ENCODE measurements at regions of chr12 and their contacts with region 1.

Region 1: GRCh38 chr12:818733-819132 is 66.4 kb downstream of the WNK1 start:
- DNase-seq: peak; percentile 44
- ATAC-seq: no peak
- H3K4me3 ChIP-seq: no peak overlapping the region
- H3K27ac ChIP-seq: no peak overlapping the region
- H3K4me1 ChIP-seq: peaks cover 10% of the 10 kb centered on the region; the same call in 1 of the 2 replicates
- H3K27me3 ChIP-seq: no peaks in the 10 kb centered on the region
- CTCF ChIP-seq: peak; percentile 30; the same call in 1 of the 2 replicates

Region 2: DNA sequence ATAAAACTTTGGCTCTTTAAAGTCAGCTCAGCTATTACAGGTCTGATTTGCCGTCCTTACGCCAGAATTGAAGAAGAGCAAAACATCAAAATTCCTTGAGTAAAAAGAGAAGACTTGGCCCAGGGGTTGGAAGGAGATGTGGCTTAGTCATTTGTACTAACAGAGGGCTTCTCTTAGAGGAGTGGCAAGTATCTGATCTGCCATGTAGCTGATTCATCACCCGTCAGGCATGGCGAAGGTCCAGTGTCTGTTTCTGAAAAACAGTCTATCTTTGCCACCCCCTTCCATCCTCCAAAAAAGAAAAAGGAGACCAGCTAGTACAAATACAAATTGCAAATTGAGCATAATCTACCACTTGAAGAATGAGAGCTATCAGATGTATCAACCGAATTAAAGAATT is 38.9 kb after region 1 on chr12:
- CTCF ChIA-PET with region 1: interaction called, 12 read pairs
- POLR2A ChIA-PET with region 1: no interaction called
- intact Hi-C with region 1: loop called (anchors 2 kb)
- DNase-seq: peak; percentile 81
- ATAC-seq: peak; percentile 91
- H3K4me3 ChIP-seq: no peak overlapping the region
- H3K27ac ChIP-seq: peak overlapping the region; percentile 53
- H3K4me1 ChIP-seq: peaks cover 29% of the 10 kb centered on the region
- H3K27me3 ChIP-seq: no peaks in the 10 kb centered on the region
- CTCF ChIP-seq: no peak

Measured in PC-3 (cell line).